Transverse colon (tissue), 4 donors: ENCODE measurements at regions of chr4 and their contacts with region 1.

Region 1: DNA sequence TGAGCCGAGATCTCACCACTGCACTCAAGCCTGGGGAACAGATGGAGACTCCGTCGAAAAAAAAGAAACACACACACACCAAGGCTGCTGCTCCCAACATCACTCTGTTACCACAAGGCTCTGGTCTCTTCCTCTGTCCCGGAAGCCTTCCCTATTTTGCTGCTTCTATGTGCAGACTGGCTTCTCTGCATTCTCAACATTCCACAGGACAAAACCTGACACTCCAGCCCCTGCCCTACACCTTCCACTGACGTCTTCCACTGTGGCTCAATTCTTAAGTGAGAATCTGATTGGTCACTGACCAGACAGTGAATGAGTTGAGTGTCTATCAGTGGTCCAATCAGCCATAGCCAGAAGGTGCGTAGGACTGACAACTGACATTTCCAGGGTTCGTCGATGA is 5.9 kb downstream of the ODAPH start:
- DNase-seq: no peak
- H3K4me3 ChIP-seq: no peak overlapping the region
- H3K27ac ChIP-seq: no peak overlapping the region
- H3K4me1 ChIP-seq: no peaks in the 10 kb centered on the region
- H3K27me3 ChIP-seq: no peaks in the 10 kb centered on the region
- CTCF ChIP-seq: no peak
- EP300 ChIP-seq: no peak
- POLR2A ChIP-seq: no peak

Region 2: GRCh38 chr4:75858721-75859120 is 296.9 kb after region 1 on chr4:
- in situ Hi-C with region 1: loop called in 1 of 4 experiments (anchors 10 kb)
- intact Hi-C with region 1: no loop called
- DNase-seq: no peak
- H3K4me3 ChIP-seq: no peak overlapping the region
- H3K27ac ChIP-seq: no peak overlapping the region
- H3K4me1 ChIP-seq: no peaks in the 10 kb centered on the region
- H3K27me3 ChIP-seq: no peaks in the 10 kb centered on the region
- CTCF ChIP-seq: no peak
- EP300 ChIP-seq: no peak
- POLR2A ChIP-seq: no peak